ENCODE measurements at regions of chr9 and their contacts with region 1.

Region 1: DNA sequence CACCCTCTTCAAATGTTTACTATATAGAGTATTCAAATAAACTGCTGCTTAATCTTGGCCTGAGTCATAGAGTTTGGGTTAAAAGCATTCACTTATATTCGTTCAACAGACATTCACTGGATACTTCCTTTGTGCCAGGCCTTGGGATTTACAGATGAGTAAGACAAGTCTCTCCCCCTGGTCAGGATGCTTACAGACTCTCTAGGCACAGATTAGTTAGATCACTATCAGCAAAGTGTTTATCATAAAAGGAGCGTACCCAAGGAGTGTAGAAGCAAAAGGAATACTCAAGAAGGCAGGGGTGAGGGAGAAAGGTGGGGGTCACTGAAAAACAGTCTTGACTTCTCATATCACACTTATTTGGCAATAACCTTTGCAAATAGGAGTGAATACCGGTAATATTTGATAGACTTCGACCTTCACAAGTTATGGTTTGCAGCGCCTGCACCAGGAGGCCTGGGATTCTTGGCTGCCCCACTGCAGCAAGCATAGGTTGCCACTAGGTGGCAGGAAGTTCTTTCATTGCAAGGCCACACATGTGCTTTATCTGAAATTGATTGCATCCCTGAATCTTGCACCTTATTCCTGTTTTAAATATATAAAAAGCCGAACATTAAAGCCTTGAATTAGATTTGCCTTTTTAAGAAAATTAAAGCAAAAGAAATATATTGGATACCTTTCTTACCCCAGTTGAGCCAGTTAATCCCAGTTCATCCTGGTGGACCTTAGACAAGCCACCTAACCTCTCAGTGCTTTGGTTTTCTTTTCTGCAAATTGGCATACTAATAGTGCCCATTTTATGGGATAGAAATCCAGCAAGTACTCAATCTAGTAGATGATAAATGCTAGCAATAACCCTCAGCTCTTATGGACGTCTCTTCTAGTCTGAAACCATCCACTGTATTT is 6.5 kb upstream of the TRMT10B start:
- DNase-seq: peak; percentile 10
- H3K4me3 ChIP-seq: no peak overlapping the region
- H3K27me3 ChIP-seq: peaks cover 2% of the 10 kb centered on the region; the same call in 1 of the 2 replicates
- CTCF ChIP-seq: peak; percentile 97

Region 2: DNA sequence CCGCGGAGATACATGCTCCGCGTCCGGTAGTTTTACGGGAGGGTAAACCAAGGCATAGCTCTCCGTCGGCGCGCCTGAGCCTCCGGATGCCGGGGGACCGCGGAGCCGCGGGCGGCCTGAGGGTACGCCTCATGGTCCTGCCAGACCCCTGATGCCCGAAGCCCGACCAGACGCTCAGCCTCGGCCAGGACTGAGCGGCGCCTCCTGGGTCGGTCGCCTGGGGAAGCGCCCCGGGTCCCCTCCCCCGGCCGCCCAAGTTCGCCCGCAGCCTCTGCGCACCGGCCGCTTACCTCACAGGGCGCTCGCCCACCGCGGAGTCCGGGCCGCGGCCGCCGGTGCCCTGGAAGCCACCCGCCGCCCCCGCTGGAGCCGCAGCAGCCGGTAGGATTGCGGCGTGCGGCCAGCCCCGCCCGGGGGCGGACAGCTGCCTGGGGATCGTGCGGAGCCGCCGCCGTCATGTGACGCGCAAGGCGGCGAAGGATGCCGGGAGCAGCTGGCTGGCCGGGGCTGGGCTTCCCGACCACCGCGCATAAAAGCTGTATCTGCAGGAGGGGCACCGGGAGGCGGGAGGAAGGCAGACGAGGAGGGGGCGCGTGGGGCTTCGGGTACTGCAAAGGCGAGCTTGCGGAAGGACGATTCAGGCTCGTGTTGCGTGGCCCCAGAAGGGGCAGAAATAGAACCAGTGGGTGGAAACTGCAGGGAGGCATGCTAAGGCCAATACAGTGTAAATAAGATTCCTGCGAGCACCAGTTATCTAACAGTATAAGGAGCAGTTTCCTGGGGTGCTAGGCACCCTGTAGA is 171.0 kb before region 1 on chr9 and contains the start of gene FBXO10:
- CTCF ChIA-PET with region 1: no interaction called
- POLR2A ChIA-PET with region 1: interaction called, 12 read pairs
- DNase-seq: no peak
- H3K4me3 ChIP-seq: peak within 1 kb of the TSS; percentile 88
- H3K27me3 ChIP-seq: no peaks in the 10 kb centered on the region
- CTCF ChIP-seq: no peak
- polyA plus RNA-seq, gene FBXO10: 10.6 and 13.3 TPM in 2 replicates

Region 3: DNA sequence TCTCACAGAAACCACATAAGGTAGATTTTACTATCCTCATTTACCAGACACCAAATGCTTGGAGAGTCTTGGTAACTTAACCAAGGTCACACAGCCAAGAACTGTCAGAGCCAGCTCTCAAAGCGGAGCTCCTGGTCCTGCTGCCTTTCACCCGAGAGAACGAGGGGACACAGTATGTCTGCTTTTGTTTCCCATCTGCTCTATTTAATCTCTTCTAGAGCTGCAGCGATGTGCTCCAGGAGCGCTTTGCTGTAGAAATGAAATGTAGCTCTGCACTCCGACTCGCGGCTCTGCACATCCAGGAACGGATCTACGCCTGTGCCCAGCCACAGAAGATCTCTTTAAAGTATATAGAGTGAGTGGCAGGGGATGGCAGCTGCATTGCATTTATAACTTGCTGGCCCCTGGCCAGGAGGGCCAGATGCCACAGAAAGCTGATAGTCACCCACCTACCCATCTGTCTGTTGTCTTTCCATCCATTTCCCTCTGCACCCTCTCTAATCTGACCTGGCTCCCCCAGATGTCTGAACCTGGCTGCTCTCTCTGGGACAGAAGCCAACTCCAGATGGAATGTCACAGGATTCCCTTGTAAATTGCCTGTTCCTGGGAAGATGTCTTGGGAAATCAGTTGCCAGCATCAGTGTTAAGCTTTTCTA is 14.9 kb before region 1 on chr9:
- CTCF ChIA-PET with region 1: interaction called, 10 read pairs
- POLR2A ChIA-PET with region 1: no interaction called
- DNase-seq: peak; percentile 5
- H3K4me3 ChIP-seq: no peak overlapping the region
- H3K27me3 ChIP-seq: peaks cover 8% of the 10 kb centered on the region
- CTCF ChIP-seq: no peak

Region 4: DNA sequence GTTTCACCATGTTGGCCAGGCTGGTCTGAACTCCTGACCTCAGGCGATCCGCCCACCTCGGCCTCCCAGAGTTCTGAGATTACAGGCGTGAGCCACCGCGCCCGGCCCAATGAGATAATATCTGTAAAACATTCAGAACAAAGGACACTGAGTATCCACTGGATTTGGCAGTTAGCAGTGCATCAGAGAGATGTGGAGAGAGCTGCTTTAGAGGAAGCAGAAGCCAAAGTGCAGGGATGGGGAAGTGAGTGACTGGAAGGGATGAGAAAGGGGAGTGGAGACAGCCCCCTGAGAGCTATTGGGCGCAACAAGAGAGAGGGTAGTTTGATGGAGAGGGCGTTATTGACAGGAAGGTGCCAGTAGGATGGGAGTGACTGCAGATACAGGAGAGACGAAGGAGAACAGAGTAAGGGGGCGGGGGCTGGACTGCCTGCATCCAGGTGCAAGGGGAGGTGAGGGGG is 479.4 kb after region 1 on chr9:
- CTCF ChIA-PET with region 1: no interaction called
- POLR2A ChIA-PET with region 1: interaction called, 11 read pairs
- DNase-seq: no peak
- H3K4me3 ChIP-seq: no peak overlapping the region
- H3K27me3 ChIP-seq: peaks cover 1% of the 10 kb centered on the region
- CTCF ChIP-seq: no peak